Naive thymus-derived CD4-positive, alpha-beta T cell (primary cell): ENCODE measurements at regions of chr12 and their contacts with region 1.

Region 1: DNA sequence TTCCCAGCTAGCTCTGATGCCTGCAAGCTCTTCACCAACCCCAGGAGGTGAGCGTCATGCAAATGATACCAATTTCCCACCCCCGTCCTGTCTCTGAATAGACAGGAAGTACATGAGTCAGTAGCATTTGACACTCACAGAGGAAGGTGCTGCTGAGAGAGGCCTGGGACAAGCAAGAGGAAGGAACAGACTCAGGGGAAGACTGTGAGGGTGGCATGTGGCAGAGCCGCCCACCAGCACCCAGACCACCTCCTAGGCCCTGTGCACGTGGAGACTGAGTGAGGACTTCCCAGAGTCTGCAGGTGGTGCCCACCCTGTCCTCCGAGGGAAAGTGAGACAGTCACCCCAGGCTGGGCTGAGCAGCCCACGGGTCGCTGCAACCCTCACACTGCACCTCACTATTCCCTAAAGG is 199.5 kb upstream of the SFSWAP start:
- DNase-seq: peak in 8 of 9 donors; percentile 34 to 74 (median 56)
- ATAC-seq: peak; percentile 92
- H3K4me3 ChIP-seq: no peak overlapping the region
- H3K4me3 Mint-ChIP-seq: peak overlapping the region; percentile 5 to 71 (median 26)
- H3K27ac ChIP-seq: peak overlapping the region; percentile 37
- H3K27ac Mint-ChIP-seq: peak overlapping the region; percentile 67 to 92 (median 82)
- H3K4me1 ChIP-seq: peaks cover 15 to 16% of the 10 kb centered on the region in 2 donors
- H3K4me1 Mint-ChIP-seq: peaks cover 6 to 21% (median 15%) of the 10 kb centered on the region in 7 donors
- H3K27me3 ChIP-seq: no peaks in the 10 kb centered on the region
- H3K27me3 Mint-ChIP-seq: peaks cover 0 to 5% (median 3%) of the 10 kb centered on the region in 5 donors

Region 2: DNA sequence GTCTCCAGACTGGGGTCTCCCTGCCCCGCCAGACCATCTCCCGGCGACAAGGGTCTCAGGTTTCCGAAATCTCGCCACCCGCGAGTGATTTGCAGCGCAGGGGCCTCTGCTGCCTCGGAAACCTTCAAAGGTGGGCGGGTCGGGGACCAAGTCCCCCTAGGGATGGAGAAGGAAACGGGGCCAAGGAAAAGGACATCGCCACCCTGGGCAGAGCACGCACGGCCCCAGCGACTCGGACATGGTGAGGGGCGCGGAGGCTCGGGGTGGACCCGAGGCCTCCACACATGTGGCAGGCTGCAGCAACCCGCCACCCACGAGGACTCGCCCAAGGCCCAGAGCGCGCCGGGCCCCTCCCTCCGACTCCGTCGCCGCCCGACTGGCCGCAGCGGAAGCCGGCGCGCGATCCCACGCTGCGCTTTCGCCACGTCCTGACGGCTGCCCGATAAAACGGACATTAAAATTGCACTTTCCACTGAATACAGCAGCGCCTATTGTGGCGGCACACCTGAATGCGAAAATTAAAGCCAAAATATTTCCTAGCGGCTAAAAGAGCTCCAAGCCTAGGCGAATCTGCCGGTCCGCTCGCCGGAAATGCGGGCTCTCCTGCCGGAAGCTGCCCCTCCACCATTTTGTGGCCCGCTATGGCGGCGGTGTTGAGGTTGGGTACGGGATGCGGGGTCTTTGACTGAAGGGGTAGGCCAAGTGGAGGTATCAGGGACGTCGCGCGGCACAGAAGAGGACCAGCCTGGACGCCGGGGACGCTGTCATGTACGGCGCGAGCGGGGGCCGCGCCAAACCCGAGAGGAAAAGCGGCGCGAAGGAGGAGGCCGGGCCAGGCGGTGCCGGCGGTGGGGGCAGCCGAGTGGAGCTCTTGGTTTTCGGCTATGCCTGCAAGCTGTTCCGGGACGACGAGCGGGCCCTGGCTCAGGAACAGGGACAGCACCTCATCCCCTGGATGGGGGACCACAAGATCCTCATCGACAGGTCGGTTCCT is 199.4 kb after region 1 on chr12 and contains the start of gene SFSWAP:
- CTCF ChIA-PET with region 1: no interaction called
- POLR2A ChIA-PET with region 1: interaction called, 3 read pairs
- intact Hi-C with region 1: loop called in 1 of 2 experiments (anchors 10 kb)
- DNase-seq: peak; percentile 63 to 81 (median 79)
- ATAC-seq: peak; percentile 92
- H3K4me3 ChIP-seq: peak within 1 kb of the TSS; percentile 84
- H3K4me3 Mint-ChIP-seq: peak within 1 kb of the TSS; percentile 93 to 99 (median 96)
- H3K27ac ChIP-seq: peak within 1 kb of the TSS; percentile 87
- H3K27ac Mint-ChIP-seq: peak within 1 kb of the TSS; percentile 90 to 99 (median 97)
- H3K4me1 ChIP-seq: peaks cover 18 to 19% of the 10 kb centered on the region in 2 donors
- H3K4me1 Mint-ChIP-seq: peaks cover 15 to 40% (median 28%) of the 10 kb centered on the region in 7 donors
- H3K27me3 ChIP-seq: no peaks in the 10 kb centered on the region
- H3K27me3 Mint-ChIP-seq: no peaks in the 10 kb centered on the region
- total RNA-seq, gene SFSWAP: 65.6 to 120 (median 98.4) TPM

Region 3: GRCh38 chr12:132014092-132014914 is 502.9 kb after region 1 on chr12:
- CTCF ChIA-PET with region 1: no interaction called
- POLR2A ChIA-PET with region 1: no interaction called
- intact Hi-C with region 1: no loop called
- DNase-seq: no peak
- ATAC-seq: no peak
- H3K4me3 ChIP-seq: no peak overlapping the region
- H3K4me3 Mint-ChIP-seq: no peak overlapping the region
- H3K27ac ChIP-seq: no peak overlapping the region
- H3K27ac Mint-ChIP-seq: no peak overlapping the region
- H3K4me1 ChIP-seq: no peaks in the 10 kb centered on the region
- H3K4me1 Mint-ChIP-seq: peaks cover 0 to 5% (median 0%) of the 10 kb centered on the region in 7 donors
- H3K27me3 ChIP-seq: no peaks in the 10 kb centered on the region
- H3K27me3 Mint-ChIP-seq: no peaks in the 10 kb centered on the region